ENCODE measurements at regions of chr14 and their contacts with region 1.

Region 1: DNA sequence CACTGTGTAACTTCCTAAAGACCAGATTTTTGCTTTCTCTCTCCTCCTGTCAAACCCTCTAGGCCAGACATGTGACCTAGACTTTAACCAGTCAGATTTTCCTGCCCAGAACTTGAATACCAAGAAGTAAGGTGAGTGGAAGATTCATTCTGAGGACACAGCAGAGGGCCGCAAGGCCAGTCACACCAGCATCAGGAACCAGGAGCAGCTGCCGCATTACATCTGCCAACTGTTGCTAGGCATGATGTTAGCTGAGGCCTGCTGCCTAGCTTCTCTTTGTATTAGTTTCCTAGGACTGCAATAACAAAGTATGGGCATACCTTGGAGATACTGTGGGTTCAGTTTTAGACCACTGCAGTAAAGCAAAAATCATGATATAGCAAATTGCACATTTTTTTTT is 101.9 kb upstream of the BMP4 start:
- DNase-seq: no peak
- H3K4me3 ChIP-seq: no peak overlapping the region
- H3K27ac ChIP-seq: no peak overlapping the region
- H3K4me1 ChIP-seq: no peaks in the 10 kb centered on the region
- H3K27me3 ChIP-seq: no peaks in the 10 kb centered on the region
- CTCF ChIP-seq: no peak

Region 2: DNA sequence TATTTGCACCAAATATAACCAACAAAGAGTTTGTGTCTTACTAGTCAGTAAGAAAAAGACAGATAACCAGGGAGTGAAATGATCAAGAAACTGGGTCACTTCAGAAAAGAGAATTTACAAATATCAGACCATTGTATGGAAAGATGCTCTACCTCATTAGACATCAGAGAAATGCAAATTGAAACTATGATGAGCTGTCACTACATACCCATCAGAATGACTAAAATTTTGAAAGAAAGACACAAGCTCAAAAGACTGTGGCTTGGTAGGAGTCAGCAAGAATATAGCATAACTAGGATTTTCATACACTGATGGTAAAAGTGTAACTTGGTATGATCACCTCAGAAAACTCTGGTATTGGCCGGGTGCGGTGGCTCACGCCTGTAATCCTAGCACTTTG is 349.1 kb before region 1 on chr14:
- intact Hi-C with region 1: loop called (anchors 5 kb)
- DNase-seq: no peak
- H3K4me3 ChIP-seq: no peak overlapping the region
- H3K27ac ChIP-seq: no peak overlapping the region
- H3K4me1 ChIP-seq: peaks cover 0 to under 1% of the 10 kb centered on the region in 2 donors
- H3K27me3 ChIP-seq: no peaks in the 10 kb centered on the region
- CTCF ChIP-seq: no peak

Region 3: DNA sequence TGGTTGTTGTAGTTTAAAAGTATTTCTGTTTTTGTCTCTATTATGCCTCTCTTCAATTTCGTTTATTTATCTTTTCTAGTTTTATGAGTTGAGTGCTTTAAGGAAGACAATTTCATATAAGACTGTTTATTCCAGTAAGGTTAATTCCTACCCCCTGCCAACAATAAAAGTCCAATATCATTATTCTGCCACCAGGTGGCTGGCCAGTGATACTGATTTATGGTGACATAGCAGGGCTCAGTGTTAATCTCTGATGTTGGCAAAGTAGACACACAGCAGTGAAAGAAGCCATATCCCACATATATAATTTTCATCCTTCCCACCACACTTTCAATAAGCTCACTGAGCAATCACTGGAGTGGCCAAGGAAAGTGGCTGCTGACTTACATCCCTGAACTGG is 32.8 kb before region 1 on chr14:
- intact Hi-C with region 1: no loop called
- DNase-seq: no peak
- H3K4me3 ChIP-seq: no peak overlapping the region
- H3K27ac ChIP-seq: no peak overlapping the region
- H3K4me1 ChIP-seq: no peaks in the 10 kb centered on the region
- H3K27me3 ChIP-seq: no peaks in the 10 kb centered on the region
- CTCF ChIP-seq: peak in 1 of 3 experiments; percentile 9

Region 4: GRCh38 chr14:54450535-54450934 is 392.0 kb after region 1 on chr14:
- intact Hi-C with region 1: no loop called
- DNase-seq: no peak
- H3K4me3 ChIP-seq: no peak overlapping the region
- H3K27ac ChIP-seq: no peak overlapping the region
- H3K4me1 ChIP-seq: peaks cover 0 to 2% of the 10 kb centered on the region in 2 donors
- H3K27me3 ChIP-seq: no peaks in the 10 kb centered on the region
- CTCF ChIP-seq: no peak

Measured in ascending aorta (tissue), 2 donors.